ENCODE measurements at regions of chr19 and their contacts with region 1.

Region 1: GRCh38 chr19:35931161-35931873 is 4.9 kb upstream of the LRFN3 start:
- DNase-seq: peak; percentile 99
- ATAC-seq: peak; percentile 100

Region 2: GRCh38 chr19:35716801-35717666 is 214.3 kb before region 1 on chr19:
- intact Hi-C with region 1: loop called (anchors 1 kb)
- DNase-seq: peak; percentile 99
- ATAC-seq: peak; percentile 96

Region 3: DNA sequence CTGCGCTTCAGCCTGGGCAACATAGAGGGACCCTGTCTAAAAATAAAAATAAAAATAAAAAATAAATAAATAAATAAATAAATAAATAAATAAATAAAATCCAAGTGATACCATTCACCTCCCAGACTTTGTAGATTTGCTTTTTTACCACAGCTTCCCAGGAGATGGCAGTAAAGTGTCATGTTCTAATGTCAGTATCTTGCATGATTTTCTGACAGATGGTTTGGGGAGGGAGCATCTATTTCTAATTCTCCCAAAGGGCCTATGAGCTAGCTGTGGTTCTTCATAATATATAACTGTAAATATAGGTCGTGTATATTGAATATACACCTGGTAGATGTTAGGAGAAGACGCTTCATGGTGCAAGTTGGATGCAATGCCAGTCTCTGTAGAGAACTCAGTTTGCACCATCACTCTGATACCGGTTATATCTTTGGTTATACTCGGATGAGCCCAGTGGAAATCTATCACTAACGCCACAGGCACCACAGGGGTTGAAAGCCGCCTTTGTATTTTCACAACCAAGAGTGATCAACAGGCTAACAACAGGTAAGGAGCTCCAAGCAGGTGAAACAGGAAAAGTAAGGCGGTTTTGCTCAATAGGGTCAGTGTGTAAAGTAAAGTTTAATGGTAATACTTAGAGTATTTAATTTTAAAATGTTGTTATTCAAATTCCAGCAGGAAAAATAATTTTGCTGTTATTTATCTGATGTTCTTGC is 49.0 kb before region 1 on chr19:
- intact Hi-C with region 1: loop called (anchors 1 kb)
- DNase-seq: no peak
- ATAC-seq: peak; percentile 45

Region 4: GRCh38 chr19:36014029-36014924 is 83.0 kb after region 1 on chr19 and contains the start of gene ALKBH6:
- intact Hi-C with region 1: loop called (anchors 5 kb)
- DNase-seq: peak; percentile 100
- ATAC-seq: peak; percentile 99
- total RNA-seq, gene ALKBH6: 12.1 TPM

Region 5: GRCh38 chr19:36081385-36081784 is 150.1 kb after region 1 on chr19:
- intact Hi-C with region 1: no loop called
- DNase-seq: no peak
- ATAC-seq: no peak

Measured in Right ventricle myocardium inferior (tissue), 1 donor.